Lower lobe of right lung (tissue), 2 donors: ENCODE measurements at regions of chr10 and their contacts with region 1.

Region 1: DNA sequence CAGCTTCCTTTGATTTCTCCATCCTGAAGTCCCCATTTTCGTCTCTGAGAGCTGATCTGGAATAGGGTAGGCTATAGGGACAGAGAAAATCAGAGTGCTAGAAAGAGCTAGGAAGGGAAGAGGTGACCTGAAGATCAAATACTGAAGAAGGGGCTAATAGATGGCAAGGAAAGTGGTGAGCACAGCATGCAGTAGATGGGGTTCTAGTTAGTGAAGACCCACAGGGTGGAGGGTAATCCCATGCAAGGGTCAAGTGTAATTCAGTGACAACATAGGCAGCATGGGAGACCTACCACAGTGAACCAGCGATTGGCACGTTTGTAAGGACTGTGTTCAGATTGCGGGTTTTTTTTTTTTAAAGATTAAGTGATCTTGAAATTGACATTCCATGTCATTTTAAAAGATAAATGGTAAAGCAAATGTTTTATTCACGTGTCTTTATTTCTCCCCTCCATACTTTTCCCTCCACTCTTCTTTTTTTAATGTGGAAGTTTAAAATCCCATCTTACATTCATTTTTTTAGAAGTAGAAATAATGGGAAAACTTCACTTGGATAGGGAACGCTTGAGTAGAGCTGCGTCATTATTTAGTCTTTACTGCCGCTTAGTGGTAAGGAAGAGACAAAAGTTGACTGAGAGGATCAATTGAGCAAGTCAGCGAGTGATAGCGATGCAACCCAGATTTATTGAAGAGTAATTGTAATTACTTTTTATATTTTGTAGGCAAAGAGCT is 21.0 kb upstream of the ABI1 start:
- DNase-seq: no peak
- ATAC-seq: peak; percentile 77 to 84
- H3K4me3 ChIP-seq: no peak overlapping the region
- H3K27ac ChIP-seq: no peak overlapping the region
- H3K4me1 ChIP-seq: no peaks in the 10 kb centered on the region
- H3K27me3 ChIP-seq: peaks cover 10% of the 10 kb centered on the region
- CTCF ChIP-seq: peak; percentile 65

Region 2: DNA sequence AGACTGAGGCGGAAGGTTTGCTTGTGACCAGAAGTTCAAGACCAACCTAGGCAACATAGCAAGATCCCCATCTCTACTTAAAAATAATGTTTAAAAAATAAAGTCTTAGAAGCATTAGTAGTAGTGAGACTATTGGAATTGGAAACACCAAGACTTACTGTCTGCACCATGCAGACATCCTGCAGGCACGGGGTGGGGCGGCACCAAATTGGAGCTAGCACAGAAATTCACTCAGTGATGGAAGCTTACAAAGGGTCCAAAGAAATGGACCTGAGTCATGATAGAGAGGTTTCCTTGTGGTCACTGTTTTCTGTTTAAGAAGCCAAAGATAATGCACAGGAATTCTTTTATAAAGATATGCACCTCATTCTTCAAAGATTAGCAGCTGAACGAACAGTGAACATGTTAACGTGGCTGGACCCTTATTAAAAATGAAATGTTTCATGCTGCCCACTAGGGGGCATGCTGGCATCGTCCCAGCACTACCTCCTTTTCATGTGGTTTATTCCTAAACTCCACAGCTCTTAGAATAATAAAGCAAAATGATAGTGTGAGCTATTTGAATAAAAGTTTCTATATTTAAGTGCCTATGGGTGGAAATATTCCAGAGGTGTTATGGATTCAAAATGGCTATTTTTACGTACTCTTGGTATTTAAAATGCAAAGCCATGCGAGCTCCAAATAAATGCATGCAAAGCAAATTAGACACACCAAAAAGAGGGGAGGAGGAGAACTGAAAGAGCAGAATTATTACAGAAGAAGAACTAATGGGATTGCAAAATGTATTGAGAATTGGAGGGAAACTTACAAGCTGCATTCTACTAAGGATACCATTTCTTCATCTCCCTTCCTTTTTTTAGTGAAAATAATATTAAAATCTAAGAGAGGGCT is 155.7 kb before region 1 on chr10:
- intact Hi-C with region 1: loop called (anchors 10 kb)
- DNase-seq: peak; percentile 68
- ATAC-seq: peak; percentile 70 to 78
- H3K4me3 ChIP-seq: no peak overlapping the region
- H3K27ac ChIP-seq: no peak overlapping the region
- H3K4me1 ChIP-seq: no peaks in the 10 kb centered on the region
- H3K27me3 ChIP-seq: no peaks in the 10 kb centered on the region
- CTCF ChIP-seq: peak; percentile 80

Region 3: GRCh38 chr10:26997610-26998009 is 115.8 kb after region 1 on chr10:
- intact Hi-C with region 1: no loop called
- DNase-seq: no peak
- ATAC-seq: no peak
- H3K4me3 ChIP-seq: no peak overlapping the region
- H3K27ac ChIP-seq: no peak overlapping the region
- H3K4me1 ChIP-seq: no peaks in the 10 kb centered on the region
- H3K27me3 ChIP-seq: no peaks in the 10 kb centered on the region
- CTCF ChIP-seq: no peak

Region 4: DNA sequence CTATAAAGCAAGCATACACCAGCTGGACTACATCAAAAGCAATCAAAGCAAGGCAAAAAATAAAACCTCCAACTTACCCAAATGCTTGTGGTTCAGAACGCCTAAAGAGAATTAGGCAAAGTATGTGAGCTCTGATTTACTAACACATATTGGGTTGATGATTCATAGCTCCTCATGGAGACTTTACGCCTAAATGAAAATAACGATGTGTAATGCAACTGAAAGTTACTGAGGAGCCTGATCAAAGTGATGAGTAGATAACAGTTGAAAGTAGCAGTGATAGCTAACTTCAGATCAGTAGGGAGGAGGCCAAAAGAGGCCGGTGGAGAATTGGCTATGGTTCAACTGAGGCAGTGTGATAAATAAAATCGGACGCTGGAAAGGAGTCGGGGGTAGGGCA is 1336.1 kb after region 1 on chr10:
- intact Hi-C with region 1: no loop called
- DNase-seq: no peak
- ATAC-seq: peak in 1 of 2 donors; percentile 51
- H3K4me3 ChIP-seq: no peak overlapping the region
- H3K27ac ChIP-seq: no peak overlapping the region
- H3K4me1 ChIP-seq: no peaks in the 10 kb centered on the region
- H3K27me3 ChIP-seq: no peaks in the 10 kb centered on the region
- CTCF ChIP-seq: no peak